Adrenal gland (tissue), 19 donors: ENCODE measurements at regions of chr6 and their contacts with region 1.

Region 1: GRCh38 chr6:43454696-43455530 is 435 bp downstream of the DLK2 start:
- DNase-seq: peak; percentile 83 to 92 (median 89)
- H3K4me3 ChIP-seq: peak overlapping the region in 2 of 4 donors; percentile 19 to 64
- H3K27ac ChIP-seq: no peak overlapping the region
- H3K4me1 ChIP-seq: peaks cover 3 to 11% of the 10 kb centered on the region in 2 donors
- H3K27me3 ChIP-seq: peaks cover 4% of the 10 kb centered on the region
- CTCF ChIP-seq: peak in 2 of 6 experiments; percentile 5 to 30
- POLR2A ChIP-seq: no peak

Region 2: DNA sequence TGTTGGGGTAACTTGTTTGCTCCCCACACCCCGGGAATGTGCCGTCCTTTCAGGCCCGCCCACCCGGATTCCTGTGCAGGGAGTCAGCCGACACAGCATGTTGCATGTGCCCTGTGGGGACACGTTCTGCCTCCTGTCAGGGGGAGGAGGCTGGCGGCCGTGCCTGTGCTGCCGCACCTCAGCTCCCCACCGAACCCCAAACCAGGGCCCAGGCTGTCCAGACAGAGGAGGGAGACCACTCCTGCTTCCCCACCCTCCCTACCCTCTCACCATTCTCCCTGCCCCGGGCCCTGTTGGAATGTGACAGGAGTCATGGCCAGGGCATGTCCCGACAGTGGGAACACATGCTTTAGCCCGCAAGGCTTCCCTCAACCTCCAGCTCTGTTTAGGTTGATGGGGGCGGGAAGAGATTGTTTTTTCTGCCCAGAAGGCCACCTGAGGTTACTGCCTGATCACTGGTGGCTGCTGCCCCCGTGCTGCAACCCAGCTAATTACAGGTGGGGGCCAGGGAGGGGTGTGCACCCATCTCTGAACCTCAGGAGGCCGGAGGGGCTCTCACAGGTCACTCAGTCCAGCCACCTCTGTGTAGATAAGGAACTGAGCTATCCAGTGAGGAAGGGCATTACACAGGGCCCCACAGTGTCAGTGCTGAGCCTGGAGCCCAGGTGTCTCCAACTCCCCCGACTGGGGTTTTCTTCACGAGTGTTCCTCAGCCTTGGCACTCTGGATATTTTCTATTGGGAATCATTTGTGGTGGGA is 41.6 kb after region 1 on chr6:
- intact Hi-C with region 1: loop called in 1 of 2 experiments (anchors 5 kb)
- DNase-seq: peak in 6 of 7 donors; percentile 40 to 67 (median 50)
- H3K4me3 ChIP-seq: no peak overlapping the region
- H3K27ac ChIP-seq: peak overlapping the region in 1 of 5 donors; percentile 13
- H3K4me1 ChIP-seq: peaks cover 24 to 29% of the 10 kb centered on the region in 2 donors
- H3K27me3 ChIP-seq: no peaks in the 10 kb centered on the region
- CTCF ChIP-seq: peak; percentile 46 to 67 (median 62)
- POLR2A ChIP-seq: no peak

Region 3: DNA sequence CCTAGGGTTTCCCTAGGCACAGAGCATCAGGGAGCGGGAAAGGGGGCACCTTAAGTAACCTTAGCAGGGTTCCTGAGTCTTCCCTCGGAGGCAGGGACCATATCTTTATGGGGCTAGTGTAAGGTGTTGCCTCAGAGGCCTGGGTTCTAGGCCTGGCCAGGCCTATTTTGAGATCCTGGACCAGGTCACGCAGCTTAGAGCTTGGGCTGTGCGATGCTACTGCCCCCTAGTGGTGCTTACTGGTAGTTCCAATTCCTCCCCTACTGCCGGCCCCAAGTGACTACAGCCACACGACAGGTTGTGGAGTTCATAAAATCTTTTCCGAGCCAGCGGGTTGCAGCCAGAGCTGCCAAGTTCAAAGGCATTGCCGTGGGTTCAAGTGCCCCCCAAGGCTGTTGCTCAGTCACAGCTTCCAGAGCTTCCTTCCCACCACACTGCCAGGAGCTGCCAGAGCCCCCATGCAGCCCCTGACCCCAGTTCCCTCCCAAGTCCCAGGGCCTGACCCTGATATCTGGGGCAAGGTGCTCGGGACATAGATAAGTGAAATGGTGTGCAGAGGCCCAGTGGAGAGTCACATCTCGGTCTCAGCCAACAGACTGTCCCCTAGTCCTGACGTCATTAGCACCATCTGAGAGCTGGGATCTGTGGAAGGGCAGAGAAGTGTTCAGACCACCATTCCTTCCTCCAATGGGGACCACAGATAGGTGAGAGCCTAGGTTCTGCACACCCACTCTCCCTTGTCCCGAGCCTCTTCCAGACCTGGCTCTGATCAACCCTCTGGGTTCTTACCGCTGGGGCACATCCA is 52.0 kb after region 1 on chr6:
- intact Hi-C with region 1: loop called in 1 of 2 experiments (anchors 5 kb)
- DNase-seq: peak; percentile 80 to 95 (median 86)
- H3K4me3 ChIP-seq: no peak overlapping the region
- H3K27ac ChIP-seq: peak overlapping the region in 3 of 5 donors; percentile 27 to 70 (median 64)
- H3K4me1 ChIP-seq: peaks cover 18% of the 10 kb centered on the region in 2 donors
- H3K27me3 ChIP-seq: no peaks in the 10 kb centered on the region
- CTCF ChIP-seq: peak; percentile 96 to 98 (median 96)
- POLR2A ChIP-seq: no peak

Region 4: GRCh38 chr6:44285552-44286284 is 830.8 kb after region 1 on chr6:
- intact Hi-C with region 1: no loop called
- DNase-seq: peak in 1 of 7 donors; percentile 28
- H3K4me3 ChIP-seq: no peak overlapping the region
- H3K27ac ChIP-seq: no peak overlapping the region
- H3K4me1 ChIP-seq: no peaks in the 10 kb centered on the region
- H3K27me3 ChIP-seq: peaks cover 21% of the 10 kb centered on the region
- CTCF ChIP-seq: no peak
- POLR2A ChIP-seq: no peak